PC-9 (cell line): ENCODE measurements at regions of chr11 and their contacts with region 1.

Region 1: GRCh38 chr11:6531267-6531752 is 34.2 kb downstream of the DNHD1 start:
- DNase-seq: peak in 1 of 2 experiments; percentile 8
- H3K4me3 ChIP-seq: no peak overlapping the region
- H3K27ac ChIP-seq: no peak overlapping the region
- H3K4me1 ChIP-seq: no peaks in the 10 kb centered on the region
- H3K27me3 ChIP-seq: no peaks in the 10 kb centered on the region
- CTCF ChIP-seq: peak; percentile 76

Region 2: GRCh38 chr11:5808500-5809121 is 722.7 kb before region 1 on chr11 and contains the start of gene OR52N2:
- CTCF ChIA-PET with region 1: no interaction called
- POLR2A ChIA-PET with region 1: interaction called, 10 read pairs
- intact Hi-C with region 1: no loop called
- DNase-seq: peak; percentile 35 to 37
- H3K4me3 ChIP-seq: peak within 1 kb of the TSS; percentile 35; the same call in 1 of the 2 replicates
- H3K27ac ChIP-seq: no peak within 1 kb of the TSS
- H3K4me1 ChIP-seq: no peaks in the 10 kb centered on the region
- H3K27me3 ChIP-seq: no peaks in the 10 kb centered on the region
- CTCF ChIP-seq: peak; percentile 78
- total RNA-seq, gene OR52N2: not detected in 2 replicates

Region 3: GRCh38 chr11:6052374-6052773 is 478.9 kb before region 1 on chr11:
- CTCF ChIA-PET with region 1: no interaction called
- POLR2A ChIA-PET with region 1: no interaction called
- intact Hi-C with region 1: no loop called
- DNase-seq: no peak
- H3K4me3 ChIP-seq: no peak overlapping the region
- H3K27ac ChIP-seq: no peak overlapping the region
- H3K4me1 ChIP-seq: no peaks in the 10 kb centered on the region
- H3K27me3 ChIP-seq: no peaks in the 10 kb centered on the region
- CTCF ChIP-seq: no peak

Region 4: GRCh38 chr11:6627762-6628241 is 96.5 kb after region 1 on chr11:
- CTCF ChIA-PET with region 1: no interaction called
- POLR2A ChIA-PET with region 1: no interaction called
- intact Hi-C with region 1: no loop called
- DNase-seq: no peak
- H3K4me3 ChIP-seq: no peak overlapping the region
- H3K27ac ChIP-seq: no peak overlapping the region
- H3K4me1 ChIP-seq: no peaks in the 10 kb centered on the region
- H3K27me3 ChIP-seq: no peaks in the 10 kb centered on the region
- CTCF ChIP-seq: no peak

Region 5: DNA sequence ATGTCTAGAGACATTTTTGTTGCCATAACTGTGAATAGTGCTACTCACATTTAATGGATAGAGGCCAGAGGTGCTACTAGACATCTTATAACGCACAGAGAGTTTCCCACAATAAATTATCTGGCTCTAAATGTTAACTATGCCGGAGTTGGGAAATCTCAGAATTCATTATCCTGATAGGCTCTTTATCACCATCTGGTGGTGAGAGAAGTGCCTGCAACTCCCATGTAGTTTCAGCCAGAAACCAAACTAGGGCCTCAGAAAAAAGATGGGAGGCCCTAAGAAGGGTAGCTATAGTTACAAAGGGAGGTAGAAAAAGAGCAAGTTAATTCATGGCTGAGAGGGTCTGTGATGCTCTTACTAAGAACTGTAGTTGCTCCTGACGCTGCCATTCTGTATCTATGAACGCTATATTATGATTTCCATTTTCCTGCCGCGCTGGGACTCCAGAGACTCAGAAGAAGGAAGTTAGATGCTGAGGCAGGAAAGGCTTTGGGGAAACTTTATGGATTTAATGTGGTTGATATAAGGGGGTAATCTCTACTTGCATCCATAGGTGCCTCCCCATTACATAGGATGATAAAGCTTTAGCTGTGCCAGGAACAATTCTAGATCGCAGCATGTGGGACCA is 174.7 kb after region 1 on chr11:
- CTCF ChIA-PET with region 1: interaction called, 4 read pairs
- POLR2A ChIA-PET with region 1: no interaction called
- intact Hi-C with region 1: loop called (anchors 1 kb)
- DNase-seq: peak in 1 of 2 experiments; percentile 15
- H3K4me3 ChIP-seq: no peak overlapping the region
- H3K27ac ChIP-seq: no peak overlapping the region
- H3K4me1 ChIP-seq: no peaks in the 10 kb centered on the region
- H3K27me3 ChIP-seq: no peaks in the 10 kb centered on the region
- CTCF ChIP-seq: peak; percentile 79